Panc1 (cell line): ENCODE measurements at regions of chr2 and their contacts with region 1.

Region 1: DNA sequence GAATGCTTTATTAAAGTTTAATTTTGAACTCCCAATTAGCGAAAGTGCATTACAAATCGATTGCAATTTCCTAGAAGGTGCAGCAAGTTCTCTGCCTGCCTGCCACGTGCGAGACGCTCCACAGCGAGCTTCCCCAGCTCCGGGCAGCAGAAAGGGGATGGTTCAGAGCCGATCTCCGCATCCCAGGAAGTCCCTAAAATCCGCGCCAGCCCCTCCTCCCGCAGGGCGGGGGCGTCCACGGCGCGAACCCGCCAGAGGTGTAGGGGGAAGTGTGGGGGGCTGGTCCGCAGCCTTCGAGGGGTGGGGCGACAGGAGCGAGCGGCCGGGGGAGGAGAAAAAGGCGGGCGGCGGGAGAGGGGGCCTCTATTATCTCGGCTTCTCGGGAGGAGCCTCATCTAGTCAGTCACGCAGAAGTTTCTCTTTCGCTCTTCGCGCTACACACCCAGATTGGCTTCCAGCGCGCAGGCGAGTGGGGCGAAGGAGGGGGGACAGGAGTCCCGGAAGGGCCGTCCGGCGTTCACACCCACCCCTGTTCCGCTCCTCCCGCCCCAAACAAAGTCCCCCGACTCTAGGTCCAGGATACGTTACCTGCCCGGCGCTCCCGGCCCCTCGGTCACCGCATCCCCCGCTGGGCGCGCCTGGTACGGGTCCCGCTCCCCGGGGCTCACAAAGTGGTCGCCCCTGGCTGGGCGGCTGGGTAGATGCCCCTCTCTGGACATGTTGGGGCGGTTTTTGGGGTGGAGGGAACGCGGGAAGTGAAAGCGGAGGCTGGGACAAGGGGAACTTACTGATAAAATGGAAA is 9.1 kb upstream of the NR4A2 start:
- DNase-seq: no peak
- ATAC-seq: peak; percentile 85
- H3K4me3 ChIP-seq: peak overlapping the region; percentile 79 to 95
- H3K27ac ChIP-seq: peak overlapping the region; percentile 85
- H3K4me1 ChIP-seq: peaks cover 14% of the 10 kb centered on the region
- H3K27me3 ChIP-seq: no peaks in the 10 kb centered on the region
- CTCF ChIP-seq: no peak

Region 2: GRCh38 chr2:155815886-155816285 is 525.8 kb before region 1 on chr2:
- CTCF ChIA-PET with region 1: no interaction called
- POLR2A ChIA-PET with region 1: no interaction called
- in situ Hi-C with region 1: no loop called
- intact Hi-C with region 1: no loop called
- DNase-seq: peak; percentile 7
- ATAC-seq: no peak
- H3K4me3 ChIP-seq: no peak overlapping the region
- H3K27ac ChIP-seq: no peak overlapping the region
- H3K4me1 ChIP-seq: no peaks in the 10 kb centered on the region
- H3K27me3 ChIP-seq: no peaks in the 10 kb centered on the region
- CTCF ChIP-seq: no peak

Region 3: DNA sequence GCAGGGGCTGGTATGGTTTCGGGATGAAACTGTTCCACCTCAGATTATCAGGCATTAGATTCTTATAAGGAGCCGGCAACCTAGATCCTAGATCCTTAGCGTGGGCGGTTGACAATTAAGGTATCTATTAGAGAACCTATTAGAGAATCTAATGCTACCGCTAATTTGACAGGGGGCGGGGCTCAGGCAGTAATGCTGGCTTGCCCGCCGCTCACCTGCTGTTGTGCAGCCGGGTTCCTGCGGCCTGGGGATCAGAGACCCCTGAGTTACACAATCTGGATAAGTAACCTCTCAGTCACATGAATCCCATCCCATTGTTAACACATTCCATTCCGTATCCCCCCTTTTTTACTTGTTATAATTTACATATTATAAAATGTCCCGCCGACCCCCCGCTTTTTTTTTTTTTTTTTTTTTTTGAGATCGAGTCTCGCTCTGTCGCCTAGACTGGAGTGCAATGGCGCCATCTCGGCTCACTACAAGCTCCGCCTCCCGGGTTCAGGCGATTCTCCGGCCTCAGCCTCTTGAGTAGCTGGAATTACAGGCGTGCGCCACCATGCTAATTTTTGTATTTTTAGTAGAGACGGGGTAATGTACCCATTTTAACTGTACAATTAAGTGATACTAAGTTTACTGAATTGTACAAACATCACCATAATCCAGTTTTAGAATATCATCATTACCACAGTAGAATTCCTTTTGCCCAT is 52.5 kb after region 1 on chr2:
- CTCF ChIA-PET with region 1: interaction called, 11 read pairs
- POLR2A ChIA-PET with region 1: no interaction called
- in situ Hi-C with region 1: no loop called
- intact Hi-C with region 1: no loop called
- DNase-seq: no peak
- ATAC-seq: no peak
- H3K4me3 ChIP-seq: no peak overlapping the region
- H3K27ac ChIP-seq: no peak overlapping the region
- H3K4me1 ChIP-seq: no peaks in the 10 kb centered on the region; the same call in 1 of the 2 replicates
- H3K27me3 ChIP-seq: no peaks in the 10 kb centered on the region
- CTCF ChIP-seq: no peak

Region 4: DNA sequence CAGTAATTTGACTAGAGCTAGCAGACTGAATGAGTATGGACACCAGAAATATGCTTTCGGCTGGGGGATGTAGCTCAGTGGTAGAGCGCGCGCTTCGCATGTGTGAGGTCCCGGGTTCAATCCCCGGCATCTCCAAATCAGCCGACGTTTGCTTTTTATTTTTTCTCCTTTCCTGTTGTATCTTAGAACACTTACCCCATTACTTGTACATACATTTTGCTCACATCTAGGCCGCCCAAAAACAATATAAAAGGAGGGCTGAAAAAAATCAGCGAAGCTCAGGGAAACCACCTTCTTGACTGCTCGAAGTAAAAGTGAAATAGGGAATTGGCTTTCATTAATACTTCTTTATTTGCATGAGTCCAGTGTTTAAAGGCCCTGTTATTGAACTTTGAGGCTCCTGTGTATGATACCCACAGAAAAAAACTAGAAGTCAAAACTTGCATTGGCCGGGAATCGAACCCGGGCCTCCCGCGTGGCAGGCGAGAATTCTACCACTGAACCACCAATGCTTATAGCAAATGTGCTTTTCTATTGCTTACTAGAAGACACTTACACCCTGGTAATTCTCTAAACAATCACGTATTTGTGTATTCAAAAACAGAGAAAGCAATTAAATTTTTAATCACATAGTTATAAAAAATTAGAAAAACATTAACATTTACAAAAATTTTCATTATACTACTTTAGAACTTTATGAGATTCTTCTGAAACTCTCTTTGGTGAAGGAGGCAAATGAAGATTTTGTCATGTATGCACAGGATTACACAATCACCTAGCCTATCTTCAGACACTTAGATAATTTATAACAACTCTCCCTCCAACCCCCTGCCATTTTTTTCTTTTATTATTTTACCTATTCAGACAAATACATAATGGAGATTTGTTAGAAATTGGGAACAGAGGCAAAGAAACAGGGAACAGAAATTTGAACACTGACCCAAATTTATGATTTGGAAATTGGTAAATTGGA is 59.3 kb after region 1 on chr2:
- CTCF ChIA-PET with region 1: no interaction called
- POLR2A ChIA-PET with region 1: no interaction called
- in situ Hi-C with region 1: no loop called
- intact Hi-C with region 1: loop called (anchors 5 kb)
- DNase-seq: peak; percentile 93
- ATAC-seq: peak; percentile 95
- H3K4me3 ChIP-seq: peak overlapping the region; percentile 76 to 77
- H3K27ac ChIP-seq: peak overlapping the region; percentile 69; the same call in 1 of the 2 replicates
- H3K4me1 ChIP-seq: peaks cover 7% of the 10 kb centered on the region
- H3K27me3 ChIP-seq: no peaks in the 10 kb centered on the region
- CTCF ChIP-seq: no peak